ENCODE measurements at regions of chr1 and their contacts with region 1.

Region 1: GRCh38 chr1:65209005-65209885 is 61.2 kb downstream of the AK4 start:
- DNase-seq: peak; percentile 70
- ATAC-seq: peak; percentile 77
- H3K4me3 ChIP-seq: no peak overlapping the region
- H3K27ac ChIP-seq: no peak overlapping the region
- H3K4me1 ChIP-seq: no peaks in the 10 kb centered on the region
- H3K27me3 ChIP-seq: no peaks in the 10 kb centered on the region
- CTCF ChIP-seq: peak; percentile 77

Region 2: GRCh38 chr1:65059930-65060538 is 149.2 kb before region 1 on chr1:
- CTCF ChIA-PET with region 1: interaction called, 9 read pairs
- POLR2A ChIA-PET with region 1: no interaction called
- intact Hi-C with region 1: loop called (anchors 1 kb)
- DNase-seq: peak; percentile 67
- ATAC-seq: no peak
- H3K4me3 ChIP-seq: no peak overlapping the region
- H3K27ac ChIP-seq: no peak overlapping the region
- H3K4me1 ChIP-seq: no peaks in the 10 kb centered on the region
- H3K27me3 ChIP-seq: no peaks in the 10 kb centered on the region
- CTCF ChIP-seq: peak; percentile 73

Region 3: GRCh38 chr1:65075123-65075976 is 133.9 kb before region 1 on chr1:
- CTCF ChIA-PET with region 1: no interaction called
- POLR2A ChIA-PET with region 1: no interaction called
- intact Hi-C with region 1: loop called (anchors 5 kb)
- DNase-seq: peak; percentile 67
- ATAC-seq: peak; percentile 91
- H3K4me3 ChIP-seq: no peak overlapping the region
- H3K27ac ChIP-seq: no peak overlapping the region
- H3K4me1 ChIP-seq: no peaks in the 10 kb centered on the region
- H3K27me3 ChIP-seq: no peaks in the 10 kb centered on the region
- CTCF ChIP-seq: peak; percentile 88

Measured in PC-3 (cell line).